ENCODE measurements at regions of chr5 and their contacts with region 1.

Region 1: GRCh38 chr5:151115274-151115905 is 34.6 kb upstream of the TNIP1 start:
- DNase-seq: peak; percentile 45 to 82 (median 76)
- ATAC-seq: peak; percentile 93
- H3K4me3 ChIP-seq: no peak overlapping the region
- H3K4me3 Mint-ChIP-seq: no peak overlapping the region
- H3K27ac ChIP-seq: no peak overlapping the region
- H3K27ac Mint-ChIP-seq: peak overlapping the region; percentile 66
- H3K4me1 ChIP-seq: peaks cover 11% of the 10 kb centered on the region
- H3K4me1 Mint-ChIP-seq: peaks cover 17% of the 10 kb centered on the region
- H3K27me3 ChIP-seq: no peaks in the 10 kb centered on the region
- H3K27me3 Mint-ChIP-seq: no peaks in the 10 kb centered on the region
- CTCF ChIP-seq: peak; percentile 93

Region 2: DNA sequence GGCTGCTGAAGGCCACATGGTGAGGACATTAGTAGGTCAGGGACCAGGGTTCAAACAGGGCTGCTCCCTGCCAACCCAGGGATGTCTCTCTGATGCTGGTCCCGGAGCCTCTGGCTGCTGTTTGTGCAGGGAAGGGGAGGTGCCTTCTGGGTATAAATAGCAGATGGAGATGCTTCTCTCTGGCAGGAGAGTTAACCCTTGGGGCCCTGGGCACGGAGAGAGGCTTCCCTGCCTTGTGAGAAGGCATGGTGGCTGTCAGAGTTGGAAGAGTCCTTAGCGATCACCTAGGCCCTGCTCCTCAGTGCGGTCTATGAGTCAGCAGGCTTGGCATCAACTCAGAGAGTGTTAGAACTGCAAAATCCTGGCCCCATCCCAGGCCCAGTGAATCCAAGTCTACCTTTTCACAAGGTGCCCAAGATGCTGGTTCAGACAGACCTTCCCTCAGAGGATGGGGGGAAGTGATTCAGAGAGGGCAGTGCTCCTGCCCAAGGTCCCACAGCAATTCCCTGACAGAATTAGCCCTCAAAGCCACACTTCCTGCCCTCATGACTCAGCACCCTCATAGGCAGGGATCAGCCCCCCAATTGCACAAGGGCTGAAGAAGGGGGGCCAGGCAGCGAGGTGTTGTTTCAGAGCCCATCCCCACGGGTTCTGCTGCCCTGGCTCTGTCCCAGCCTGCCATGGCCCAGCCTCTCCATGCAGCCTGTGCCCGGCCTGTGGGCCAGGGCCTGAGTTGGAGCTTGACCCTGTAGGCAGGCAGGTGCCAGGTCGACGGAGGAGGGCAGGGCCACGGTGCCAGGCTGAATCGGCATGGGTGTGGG is 851.4 kb before region 1 on chr5:
- CTCF ChIA-PET with region 1: no interaction called
- POLR2A ChIA-PET with region 1: no interaction called
- intact Hi-C with region 1: no loop called
- DNase-seq: no peak
- ATAC-seq: no peak
- H3K4me3 ChIP-seq: no peak overlapping the region
- H3K4me3 Mint-ChIP-seq: no peak overlapping the region
- H3K27ac ChIP-seq: no peak overlapping the region
- H3K27ac Mint-ChIP-seq: no peak overlapping the region
- H3K4me1 ChIP-seq: no peaks in the 10 kb centered on the region
- H3K4me1 Mint-ChIP-seq: no peaks in the 10 kb centered on the region
- H3K27me3 ChIP-seq: no peaks in the 10 kb centered on the region
- H3K27me3 Mint-ChIP-seq: peaks cover 2% of the 10 kb centered on the region
- CTCF ChIP-seq: no peak

Region 3: GRCh38 chr5:150560401-150561193 is 554.8 kb before region 1 on chr5:
- CTCF ChIA-PET with region 1: interaction called, 5 read pairs
- POLR2A ChIA-PET with region 1: no interaction called
- intact Hi-C with region 1: loop called in 1 of 2 experiments (anchors 2 kb)
- DNase-seq: peak; percentile 68 to 93 (median 84)
- ATAC-seq: peak; percentile 97
- H3K4me3 ChIP-seq: no peak overlapping the region
- H3K4me3 Mint-ChIP-seq: no peak overlapping the region
- H3K27ac ChIP-seq: no peak overlapping the region
- H3K27ac Mint-ChIP-seq: no peak overlapping the region
- H3K4me1 ChIP-seq: no peaks in the 10 kb centered on the region
- H3K4me1 Mint-ChIP-seq: no peaks in the 10 kb centered on the region
- H3K27me3 ChIP-seq: no peaks in the 10 kb centered on the region
- H3K27me3 Mint-ChIP-seq: peaks cover 3% of the 10 kb centered on the region
- CTCF ChIP-seq: peak; percentile 92

Region 4: GRCh38 chr5:151051066-151051930 is 64.1 kb before region 1 on chr5:
- CTCF ChIA-PET with region 1: interaction called, 514 read pairs
- POLR2A ChIA-PET with region 1: interaction called, 3 read pairs
- intact Hi-C with region 1: loop called (anchors 1 kb)
- DNase-seq: peak; percentile 50 to 84 (median 76)
- ATAC-seq: peak; percentile 75
- H3K4me3 ChIP-seq: no peak overlapping the region
- H3K4me3 Mint-ChIP-seq: no peak overlapping the region
- H3K27ac ChIP-seq: no peak overlapping the region
- H3K27ac Mint-ChIP-seq: peak overlapping the region; percentile 22
- H3K4me1 ChIP-seq: peaks cover 4% of the 10 kb centered on the region
- H3K4me1 Mint-ChIP-seq: peaks cover 11% of the 10 kb centered on the region
- H3K27me3 ChIP-seq: no peaks in the 10 kb centered on the region
- H3K27me3 Mint-ChIP-seq: no peaks in the 10 kb centered on the region
- CTCF ChIP-seq: peak; percentile 72

Region 5: GRCh38 chr5:151080623-151081430 is 34.6 kb before region 1 on chr5 and contains the start of gene TNIP1:
- CTCF ChIA-PET with region 1: interaction called, 121 read pairs
- POLR2A ChIA-PET with region 1: interaction called, 6 read pairs
- intact Hi-C with region 1: loop called (anchors 2 to 5 kb)
- DNase-seq: peak; percentile 87 to 97 (median 94)
- ATAC-seq: peak; percentile 84
- H3K4me3 ChIP-seq: peak within 1 kb of the TSS; percentile 76
- H3K4me3 Mint-ChIP-seq: peak within 1 kb of the TSS; percentile 93
- H3K27ac ChIP-seq: peak within 1 kb of the TSS; percentile 70 to 98
- H3K27ac Mint-ChIP-seq: peak within 1 kb of the TSS; percentile 95
- H3K4me1 ChIP-seq: peaks cover 56% of the 10 kb centered on the region
- H3K4me1 Mint-ChIP-seq: peaks cover 80% of the 10 kb centered on the region
- H3K27me3 ChIP-seq: no peaks in the 10 kb centered on the region
- H3K27me3 Mint-ChIP-seq: no peaks in the 10 kb centered on the region
- CTCF ChIP-seq: no peak
- total RNA-seq, gene TNIP1: 133 to 134 TPM

Region 6: DNA sequence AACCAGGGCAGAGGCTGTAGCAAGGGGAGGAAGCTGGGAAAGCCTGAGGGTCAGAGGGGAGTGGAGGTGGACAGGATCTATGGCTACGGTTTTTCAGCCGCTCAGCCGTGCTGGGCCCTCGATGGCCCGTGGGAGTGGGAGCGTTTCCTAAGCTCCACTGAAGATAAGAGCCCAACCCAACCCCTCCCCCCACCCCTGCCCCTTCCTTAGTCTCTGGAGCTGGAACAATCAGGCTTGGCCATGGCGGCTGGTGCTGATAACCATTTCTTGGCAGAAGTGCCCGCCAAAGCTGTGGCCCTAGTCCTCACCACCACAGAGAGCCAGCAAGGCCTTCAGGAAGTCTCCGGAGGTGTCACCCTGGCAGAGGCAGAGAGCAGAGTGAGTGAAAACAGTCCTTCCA is 14.2 kb before region 1 on chr5:
- CTCF ChIA-PET with region 1: interaction called, 47 read pairs
- POLR2A ChIA-PET with region 1: interaction called, 4 read pairs
- intact Hi-C with region 1: loop called in 1 of 2 experiments (anchors 2 kb)
- DNase-seq: no peak
- ATAC-seq: no peak
- H3K4me3 ChIP-seq: no peak overlapping the region
- H3K4me3 Mint-ChIP-seq: no peak overlapping the region
- H3K27ac ChIP-seq: no peak overlapping the region
- H3K27ac Mint-ChIP-seq: peak overlapping the region; percentile 52
- H3K4me1 ChIP-seq: peaks cover 26% of the 10 kb centered on the region
- H3K4me1 Mint-ChIP-seq: peaks cover 41% of the 10 kb centered on the region
- H3K27me3 ChIP-seq: no peaks in the 10 kb centered on the region
- H3K27me3 Mint-ChIP-seq: no peaks in the 10 kb centered on the region
- CTCF ChIP-seq: no peak

Region 7: DNA sequence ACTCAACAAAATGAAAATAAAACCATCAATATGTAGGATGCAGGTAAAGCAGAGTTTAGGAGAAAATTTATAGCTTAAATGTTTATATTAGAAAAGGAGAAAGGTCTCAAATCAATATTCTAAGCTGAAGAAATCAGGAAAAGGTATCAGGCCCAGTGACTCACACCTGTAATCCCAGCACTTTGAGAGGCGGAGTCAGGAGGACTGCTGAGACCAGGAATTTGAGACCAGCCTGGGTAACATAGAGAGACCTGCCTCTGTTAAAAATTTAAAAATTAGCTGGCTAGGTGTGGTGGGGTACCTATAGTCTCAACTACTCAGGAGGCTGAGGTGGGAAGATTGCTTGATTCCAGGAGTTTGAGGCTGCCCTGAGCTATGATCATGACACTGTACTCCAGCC is 76.3 kb after region 1 on chr5:
- CTCF ChIA-PET with region 1: interaction called, 11 read pairs
- POLR2A ChIA-PET with region 1: no interaction called
- intact Hi-C with region 1: no loop called
- DNase-seq: peak in 1 of 9 experiments; percentile 17
- ATAC-seq: no peak
- H3K4me3 ChIP-seq: no peak overlapping the region
- H3K4me3 Mint-ChIP-seq: no peak overlapping the region
- H3K27ac ChIP-seq: no peak overlapping the region
- H3K27ac Mint-ChIP-seq: peak overlapping the region; percentile 45
- H3K4me1 ChIP-seq: peaks cover 24% of the 10 kb centered on the region
- H3K4me1 Mint-ChIP-seq: peaks cover 61% of the 10 kb centered on the region
- H3K27me3 ChIP-seq: no peaks in the 10 kb centered on the region
- H3K27me3 Mint-ChIP-seq: no peaks in the 10 kb centered on the region
- CTCF ChIP-seq: no peak

Region 8: DNA sequence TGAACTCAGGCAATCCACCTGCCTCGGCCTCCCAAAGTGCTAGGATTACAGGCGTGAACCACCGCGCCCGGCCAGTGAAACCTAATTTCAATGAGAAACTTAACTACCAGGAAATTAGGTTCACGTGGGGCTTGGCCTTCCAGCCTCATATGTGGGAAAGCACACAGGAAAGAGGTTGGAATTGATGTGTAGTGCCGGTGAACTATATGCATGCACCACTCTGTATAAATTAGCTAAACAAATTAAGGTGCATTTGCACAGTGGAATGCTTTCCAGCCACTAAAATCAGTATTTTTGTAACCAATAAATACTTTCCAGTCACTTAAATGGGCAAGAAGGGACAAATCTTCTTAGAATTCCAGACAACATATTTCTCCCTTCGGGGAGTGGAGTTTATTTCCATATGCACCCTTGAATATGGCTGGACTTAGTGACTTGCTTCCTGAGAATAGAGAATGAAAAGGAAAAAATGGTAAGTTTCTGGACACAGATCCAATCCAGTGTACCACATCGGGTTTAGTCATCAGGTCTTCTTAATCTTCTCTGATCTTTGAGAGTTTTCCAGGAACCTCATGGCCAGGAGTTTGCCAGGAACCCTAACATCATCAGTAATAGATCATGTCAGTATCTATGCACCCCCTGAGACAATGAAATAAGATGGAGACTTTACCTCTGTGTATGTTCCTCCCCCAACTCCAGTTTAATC is 618.1 kb after region 1 on chr5:
- CTCF ChIA-PET with region 1: no interaction called
- POLR2A ChIA-PET with region 1: no interaction called
- intact Hi-C with region 1: no loop called
- DNase-seq: no peak
- ATAC-seq: no peak
- H3K4me3 ChIP-seq: no peak overlapping the region
- H3K4me3 Mint-ChIP-seq: no peak overlapping the region
- H3K27ac ChIP-seq: no peak overlapping the region
- H3K27ac Mint-ChIP-seq: no peak overlapping the region
- H3K4me1 ChIP-seq: no peaks in the 10 kb centered on the region
- H3K4me1 Mint-ChIP-seq: no peaks in the 10 kb centered on the region
- H3K27me3 ChIP-seq: no peaks in the 10 kb centered on the region
- H3K27me3 Mint-ChIP-seq: no peaks in the 10 kb centered on the region
- CTCF ChIP-seq: no peak

Measured in CD8-positive, alpha-beta T cell (primary cell).